ENCODE measurements at regions of chr11 and their contacts with region 1.

Region 1: DNA sequence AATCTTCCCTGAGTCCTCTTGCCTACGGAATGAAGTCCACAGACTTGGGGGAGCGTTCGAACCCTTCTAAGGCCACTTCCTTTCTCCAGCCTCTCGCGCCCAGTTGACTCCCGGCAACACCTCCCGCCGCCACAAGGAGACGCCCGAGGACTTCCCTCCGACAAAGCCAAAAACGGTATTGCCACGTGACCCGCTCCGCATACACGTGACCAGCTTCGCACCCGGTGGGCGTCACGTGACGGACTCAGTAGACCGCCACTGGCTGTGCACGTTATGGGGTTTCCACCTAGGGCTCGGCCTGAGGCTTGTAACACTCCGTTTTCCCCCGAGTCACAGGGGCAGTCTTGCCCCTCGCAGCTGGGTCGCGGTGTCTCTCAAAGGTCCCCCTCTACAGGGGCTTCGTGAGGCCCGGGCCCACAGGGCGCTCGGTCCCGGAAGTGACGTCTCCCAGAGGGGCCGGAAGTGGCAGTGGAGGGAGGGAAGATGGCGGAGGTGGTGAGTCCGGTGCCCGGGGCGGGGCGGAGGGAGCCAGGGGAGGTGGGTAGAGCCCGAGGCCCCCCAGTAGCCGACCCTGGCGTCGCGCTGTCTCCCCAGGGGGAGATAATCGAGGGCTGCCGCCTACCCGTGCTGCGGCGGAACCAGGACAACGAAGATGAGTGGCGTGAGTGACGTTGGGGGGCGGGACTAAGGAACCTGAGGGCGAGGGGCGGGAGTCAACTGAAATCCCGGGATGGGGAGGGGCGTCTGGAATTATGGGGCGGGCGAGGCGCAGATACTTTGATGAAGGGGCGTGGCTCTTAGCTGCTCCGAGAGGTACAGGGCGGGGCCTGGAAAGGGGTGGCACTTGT is at the start of gene KAT5:
- DNase-seq: peak; percentile 99
- H3K4me3 Mint-ChIP-seq: peak within 1 kb of the TSS; percentile 90
- H3K27ac Mint-ChIP-seq: peak within 1 kb of the TSS; percentile 97
- H3K4me1 Mint-ChIP-seq: peaks cover 27% of the 10 kb centered on the region
- H3K27me3 Mint-ChIP-seq: no peaks in the 10 kb centered on the region
- total RNA-seq, gene KAT5: 55.9 to 61.6 TPM

Region 2: GRCh38 chr11:65726660-65727059 is 14.7 kb after region 1 on chr11:
- CTCF ChIA-PET with region 1: interaction called, 19 read pairs
- POLR2A ChIA-PET with region 1: no interaction called
- intact Hi-C with region 1: no loop called
- DNase-seq: no peak
- H3K4me3 Mint-ChIP-seq: no peak overlapping the region
- H3K27ac Mint-ChIP-seq: no peak overlapping the region
- H3K4me1 Mint-ChIP-seq: no peaks in the 10 kb centered on the region
- H3K27me3 Mint-ChIP-seq: peaks cover under 1% of the 10 kb centered on the region

Region 3: DNA sequence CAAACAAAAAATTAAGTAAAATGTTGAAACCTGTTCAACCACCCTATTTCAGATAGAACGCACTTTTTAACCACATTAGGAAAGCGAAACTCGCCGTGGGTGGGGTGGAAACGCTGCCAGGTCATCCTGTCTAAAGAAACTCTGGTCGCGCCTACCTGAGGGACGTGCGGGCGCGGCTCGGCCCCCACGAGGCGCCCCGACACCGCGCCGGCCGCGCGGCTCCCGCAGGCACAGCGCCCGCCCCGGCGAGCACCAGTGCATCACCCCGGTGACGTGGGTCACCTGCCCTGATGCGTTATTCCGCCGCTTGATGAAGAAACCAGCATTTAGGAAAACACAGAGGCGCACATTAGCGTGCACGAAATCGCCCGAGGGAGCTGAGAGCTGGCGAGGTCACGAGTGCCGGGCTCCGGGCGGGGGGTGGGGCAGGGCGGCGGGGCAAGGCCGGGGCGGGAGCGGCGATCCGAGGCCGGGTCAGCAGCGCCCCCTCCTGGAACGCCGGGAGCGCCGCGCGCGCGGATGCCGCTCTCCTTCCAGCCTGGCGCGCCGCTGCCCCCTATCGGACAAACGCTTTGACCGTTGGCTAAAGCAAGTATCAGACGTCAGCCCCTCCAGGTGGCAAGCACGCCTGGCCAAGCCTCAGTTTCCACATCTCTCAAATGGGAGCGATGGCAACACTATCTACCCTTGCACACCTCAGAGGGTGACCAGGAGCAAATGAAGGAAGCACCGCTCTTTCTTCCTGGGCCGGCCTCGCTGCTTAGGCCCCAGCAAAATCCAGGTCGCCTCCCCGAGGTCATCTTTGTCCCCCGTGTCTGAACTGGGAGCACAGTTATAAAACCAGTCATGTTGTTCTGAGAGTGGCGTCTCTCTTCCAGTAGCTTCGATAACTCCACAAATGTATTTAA is 106.1 kb after region 1 on chr11:
- CTCF ChIA-PET with region 1: interaction called, 52 read pairs
- POLR2A ChIA-PET with region 1: interaction called, 4 read pairs
- intact Hi-C with region 1: loop called (anchors 1 kb)
- DNase-seq: peak; percentile 95
- H3K4me3 Mint-ChIP-seq: peak overlapping the region; percentile 69
- H3K27ac Mint-ChIP-seq: peak overlapping the region; percentile 46
- H3K4me1 Mint-ChIP-seq: peaks cover 10% of the 10 kb centered on the region
- H3K27me3 Mint-ChIP-seq: no peaks in the 10 kb centered on the region

Region 4: DNA sequence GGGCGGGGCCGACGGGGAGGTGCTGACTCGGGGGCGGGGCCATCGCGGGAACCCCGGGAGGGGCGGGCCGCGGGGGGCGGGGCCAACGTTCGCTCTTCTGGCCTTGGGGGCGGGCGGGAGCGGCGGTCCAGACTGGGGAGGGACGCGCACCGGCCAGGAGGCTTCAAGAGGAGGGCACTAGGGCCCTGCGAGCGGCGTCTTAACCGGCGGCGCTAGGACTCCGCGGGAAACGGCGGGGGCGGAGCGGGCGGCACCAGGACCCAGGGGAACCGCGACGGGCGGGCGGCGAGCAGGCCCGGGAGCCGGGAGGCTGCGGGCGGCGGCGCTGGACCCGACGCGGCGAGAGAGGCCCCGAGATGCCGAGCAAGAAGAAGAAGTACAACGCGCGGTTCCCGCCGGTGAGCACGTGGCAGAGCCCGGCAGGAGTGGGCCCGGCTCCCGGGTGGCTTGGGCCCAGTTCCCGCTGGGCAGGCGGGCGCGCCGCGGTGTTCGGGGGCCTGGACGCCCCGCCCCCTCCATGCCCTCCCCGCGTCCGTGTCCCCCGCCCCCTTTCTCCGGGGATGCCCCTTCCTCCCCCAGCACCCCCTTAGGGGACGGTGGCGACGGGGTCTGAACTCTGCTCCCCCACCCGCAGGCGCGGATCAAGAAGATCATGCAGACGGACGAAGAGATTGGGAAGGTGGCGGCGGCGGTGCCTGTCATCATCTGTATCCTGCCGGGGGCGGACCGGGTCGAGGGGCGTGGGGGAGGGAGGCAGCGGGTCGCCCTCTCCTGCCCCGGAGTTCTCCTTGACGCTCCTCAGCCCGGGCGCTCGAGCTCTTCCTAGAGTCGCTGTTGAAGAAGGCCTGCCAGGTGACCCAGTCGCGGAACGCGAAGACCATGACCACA is 207.4 kb after region 1 on chr11 and contains the start of gene DRAP1:
- CTCF ChIA-PET with region 1: no interaction called
- POLR2A ChIA-PET with region 1: interaction called, 3 read pairs
- intact Hi-C with region 1: loop called (anchors 5 kb)
- DNase-seq: peak; percentile 99
- H3K4me3 Mint-ChIP-seq: peak within 1 kb of the TSS; percentile 90
- H3K27ac Mint-ChIP-seq: peak within 1 kb of the TSS; percentile 84
- H3K4me1 Mint-ChIP-seq: peaks cover 33% of the 10 kb centered on the region
- H3K27me3 Mint-ChIP-seq: no peaks in the 10 kb centered on the region
- total RNA-seq, gene DRAP1: 154 to 169 TPM

Region 5: GRCh38 chr11:66001942-66002647 is 290.1 kb after region 1 on chr11 and contains the starts of genes BANF1 and EIF1AD:
- CTCF ChIA-PET with region 1: interaction called, 4 read pairs
- POLR2A ChIA-PET with region 1: interaction called, 3 read pairs
- intact Hi-C with region 1: loop called (anchors 1 kb)
- DNase-seq: peak; percentile 97
- H3K4me3 Mint-ChIP-seq: peak within 1 kb of the TSS; percentile 99
- H3K27ac Mint-ChIP-seq: peak within 1 kb of the TSS; percentile 99
- H3K4me1 Mint-ChIP-seq: peaks cover 38% of the 10 kb centered on the region
- H3K27me3 Mint-ChIP-seq: no peaks in the 10 kb centered on the region
- total RNA-seq, gene BANF1: 264 to 280 TPM
- total RNA-seq, gene EIF1AD: 41.2 to 42.7 TPM

Region 6: DNA sequence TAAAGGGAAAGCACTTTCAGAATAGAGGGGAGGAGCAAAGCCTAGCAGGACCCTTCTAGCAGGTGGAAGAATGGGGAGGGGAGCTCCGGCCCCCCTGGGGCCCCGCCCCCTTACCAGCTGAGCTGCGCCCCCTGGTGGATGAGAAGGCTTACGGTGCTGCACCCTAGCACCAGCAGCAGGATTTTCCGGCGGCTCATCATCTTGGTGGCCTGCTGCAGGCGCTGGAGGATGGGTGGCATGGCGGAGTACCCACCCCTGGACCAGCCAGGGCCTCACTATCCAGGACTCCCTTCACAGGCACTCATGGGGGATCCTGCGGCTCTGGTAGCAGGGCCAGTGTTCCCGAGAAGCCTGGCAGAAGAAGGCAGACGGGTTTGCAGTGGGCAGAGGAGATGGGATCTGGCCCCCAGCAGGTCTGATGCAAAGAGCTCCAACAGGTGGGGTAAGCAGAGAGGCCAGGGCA is 333.2 kb after region 1 on chr11:
- CTCF ChIA-PET with region 1: interaction called, 10 read pairs
- POLR2A ChIA-PET with region 1: interaction called, 5 read pairs
- intact Hi-C with region 1: no loop called
- DNase-seq: peak; percentile 88
- H3K4me3 Mint-ChIP-seq: peak overlapping the region; percentile 42
- H3K27ac Mint-ChIP-seq: peak overlapping the region; percentile 82
- H3K4me1 Mint-ChIP-seq: peaks cover 21% of the 10 kb centered on the region
- H3K27me3 Mint-ChIP-seq: peaks cover 5% of the 10 kb centered on the region

Measured in activated CD4-positive, alpha-beta memory T cell treated with anti-CD3 and anti-CD28 coated beads for 36 hours (primary cell).